T-cell (primary cell): ENCODE measurements at regions of chr6 and their contacts with region 1.

Region 1: GRCh38 chr6:7523922-7524321 is 17.5 kb upstream of the DSP start:
- DNase-seq: no peak
- ATAC-seq: no peak
- H3K4me3 ChIP-seq: no peak overlapping the region
- H3K4me3 Mint-ChIP-seq: no peak overlapping the region
- H3K27ac ChIP-seq: no peak overlapping the region
- H3K27ac Mint-ChIP-seq: no peak overlapping the region
- H3K4me1 ChIP-seq: no peaks in the 10 kb centered on the region
- H3K4me1 Mint-ChIP-seq: no peaks in the 10 kb centered on the region
- H3K27me3 ChIP-seq: peaks cover 4 to 14% of the 10 kb centered on the region in 2 experiments
- H3K27me3 Mint-ChIP-seq: peaks cover 54 to 58% of the 10 kb centered on the region in 2 donors

Region 2: DNA sequence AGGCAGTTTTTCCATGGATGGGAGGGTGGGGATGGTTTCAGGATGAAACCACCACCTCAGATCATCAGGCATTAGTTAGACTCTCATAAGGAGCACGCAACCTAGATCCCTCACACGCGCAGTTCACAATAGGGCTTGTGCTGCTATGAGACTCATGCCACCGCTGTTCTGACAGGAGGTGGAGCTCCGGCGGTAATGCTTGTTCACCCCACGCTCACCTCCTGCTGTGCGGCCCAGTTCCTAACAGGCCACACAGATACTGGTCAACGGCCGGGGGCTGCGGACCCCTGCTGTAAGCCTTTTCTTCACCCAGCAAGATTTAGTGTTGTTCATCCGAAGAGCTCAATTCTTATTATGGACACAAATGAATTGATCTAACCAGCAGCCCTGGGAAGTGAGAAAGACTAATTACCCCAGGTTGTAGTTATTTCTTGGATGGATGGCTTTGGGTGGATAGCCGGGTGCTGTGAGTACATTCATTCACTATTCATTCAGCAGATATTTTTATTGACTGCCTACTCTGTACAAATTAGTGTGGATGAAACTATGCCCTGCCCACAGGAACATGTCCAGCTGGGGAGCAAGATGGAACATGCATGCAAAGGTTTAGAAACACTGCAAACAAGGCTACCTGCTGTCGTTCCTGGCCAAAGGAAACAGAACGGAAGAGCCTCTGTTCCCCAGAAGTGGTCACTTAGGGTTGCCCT is 77.2 kb before region 1 on chr6:
- CTCF ChIA-PET with region 1: no interaction called
- POLR2A ChIA-PET with region 1: no interaction called
- DNase-seq: no peak
- ATAC-seq: no peak
- H3K4me3 ChIP-seq: no peak overlapping the region
- H3K4me3 Mint-ChIP-seq: no peak overlapping the region
- H3K27ac ChIP-seq: no peak overlapping the region
- H3K27ac Mint-ChIP-seq: no peak overlapping the region
- H3K4me1 ChIP-seq: no peaks in the 10 kb centered on the region
- H3K4me1 Mint-ChIP-seq: no peaks in the 10 kb centered on the region
- H3K27me3 ChIP-seq: peaks cover 0 to 9% of the 10 kb centered on the region in 2 experiments
- H3K27me3 Mint-ChIP-seq: peaks cover 11 to 14% of the 10 kb centered on the region in 2 donors

Region 3: DNA sequence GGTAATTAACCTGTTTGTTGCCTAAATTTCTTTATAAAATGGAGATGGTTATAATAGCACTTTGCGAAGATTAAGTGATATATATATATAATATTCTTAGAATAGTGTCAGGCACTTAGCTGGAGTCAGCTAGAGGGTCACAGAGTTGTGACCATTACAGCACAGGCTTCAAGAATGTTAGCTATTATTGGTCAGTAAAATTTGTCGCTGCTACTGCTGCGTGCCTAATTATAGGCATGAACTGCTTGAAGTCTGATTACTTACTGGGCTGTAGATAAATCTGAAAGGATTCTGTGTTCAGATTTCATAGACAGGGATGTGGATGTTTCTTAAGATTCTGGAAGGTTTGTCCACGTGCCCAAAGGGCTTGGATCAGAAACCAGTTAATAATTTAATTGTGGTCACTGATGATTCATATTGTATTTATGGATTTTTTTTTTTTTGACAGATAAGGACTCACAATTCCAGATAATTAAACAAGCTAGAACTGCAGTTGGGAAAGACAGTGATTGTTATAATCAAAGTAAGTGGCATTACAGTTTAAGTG is 70.7 kb after region 1 on chr6:
- CTCF ChIA-PET with region 1: no interaction called
- POLR2A ChIA-PET with region 1: interaction called in 1 of 2 experiments, 11 read pairs
- DNase-seq: no peak
- ATAC-seq: no peak
- H3K4me3 ChIP-seq: no peak overlapping the region
- H3K4me3 Mint-ChIP-seq: no peak overlapping the region
- H3K27ac ChIP-seq: no peak overlapping the region
- H3K27ac Mint-ChIP-seq: no peak overlapping the region
- H3K4me1 ChIP-seq: peaks cover 8% of the 10 kb centered on the region in 2 experiments
- H3K4me1 Mint-ChIP-seq: peaks cover 35 to 39% (median 36%) of the 10 kb centered on the region in 3 donors
- H3K27me3 ChIP-seq: no peaks in the 10 kb centered on the region
- H3K27me3 Mint-ChIP-seq: no peaks in the 10 kb centered on the region

Region 4: DNA sequence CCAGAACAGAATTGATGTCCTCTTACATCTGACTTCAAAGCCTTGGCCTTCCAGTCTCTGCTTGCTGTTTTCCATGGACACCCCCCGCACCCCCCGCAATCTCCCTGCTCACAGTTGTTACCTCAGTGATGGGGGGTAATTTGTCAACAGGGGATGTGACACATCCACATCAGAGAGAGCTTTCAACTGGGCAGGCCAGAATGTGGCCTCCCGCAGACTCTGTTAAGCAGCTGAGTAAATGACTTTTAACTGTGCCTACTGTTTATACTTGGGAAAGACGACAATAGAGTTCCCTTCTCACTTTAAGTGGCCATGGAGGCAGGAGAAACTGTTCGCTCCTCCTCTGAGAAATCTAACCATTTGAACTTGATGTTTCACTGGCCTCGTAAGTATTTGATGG is 335.7 kb after region 1 on chr6:
- CTCF ChIA-PET with region 1: no interaction called
- POLR2A ChIA-PET with region 1: no interaction called
- DNase-seq: no peak
- ATAC-seq: no peak
- H3K4me3 ChIP-seq: no peak overlapping the region
- H3K4me3 Mint-ChIP-seq: no peak overlapping the region
- H3K27ac ChIP-seq: no peak overlapping the region
- H3K27ac Mint-ChIP-seq: no peak overlapping the region
- H3K4me1 ChIP-seq: no peaks in the 10 kb centered on the region
- H3K4me1 Mint-ChIP-seq: no peaks in the 10 kb centered on the region
- H3K27me3 ChIP-seq: peaks cover 0 to 8% of the 10 kb centered on the region in 2 experiments
- H3K27me3 Mint-ChIP-seq: peaks cover 4 to 10% of the 10 kb centered on the region in 2 donors